ENCODE measurements at regions of chr17 and their contacts with region 1.

Region 1: DNA sequence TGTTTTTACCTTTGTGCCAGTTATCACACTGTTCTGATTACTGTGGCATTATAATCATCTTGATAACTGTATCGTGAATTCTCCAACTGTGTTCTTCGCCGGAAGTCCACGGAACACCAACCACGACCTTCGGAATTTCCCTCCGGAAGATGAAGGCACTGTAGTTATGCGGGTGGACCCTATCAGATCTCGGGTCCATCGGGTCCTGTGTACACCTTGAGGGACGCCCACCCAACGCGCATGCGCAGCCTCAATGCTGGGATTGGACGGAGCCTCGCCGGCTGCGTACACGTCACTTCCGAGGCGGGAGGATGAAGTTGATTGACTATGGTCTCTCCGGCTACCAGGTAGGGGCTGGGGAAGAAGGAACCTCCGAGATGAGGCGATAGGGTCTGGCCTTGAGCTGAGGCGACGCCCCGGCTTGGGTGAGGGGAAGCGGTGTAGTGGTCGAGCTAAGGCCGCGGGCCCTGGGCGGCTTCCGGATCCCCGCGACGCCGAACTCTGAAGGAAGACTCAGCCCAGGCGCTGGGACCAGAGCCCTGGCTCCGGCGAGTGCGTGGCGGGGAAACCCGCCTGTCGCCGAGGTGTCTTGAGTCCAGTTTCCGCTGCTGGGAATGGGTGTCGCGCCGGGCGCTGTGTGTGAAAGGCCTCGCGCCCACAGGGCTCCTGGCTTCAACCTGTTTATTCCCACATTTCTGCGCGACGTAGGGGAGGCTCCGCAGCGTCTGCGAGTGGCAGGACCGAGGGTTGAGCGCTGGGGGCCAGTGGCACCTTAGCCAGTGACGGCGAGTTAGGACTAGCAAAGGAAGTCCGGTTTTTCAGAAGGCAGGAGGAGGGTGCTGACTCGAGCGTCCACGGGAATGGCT is at the start of gene DHRS7B:
- DNase-seq: peak; percentile 93
- H3K4me3 ChIP-seq: peak within 1 kb of the TSS; percentile 47 to 84 (median 67)
- H3K27ac ChIP-seq: peak within 1 kb of the TSS; percentile 73
- H3K4me1 ChIP-seq: peaks cover 20% of the 10 kb centered on the region
- H3K27me3 ChIP-seq: peaks cover 0 to 2% of the 10 kb centered on the region in 2 experiments
- CTCF ChIP-seq: no peak
- POLR2A ChIP-seq: no peak
- total RNA-seq, gene DHRS7B: 12.7 and 14.0 TPM in 2 replicates

Region 2: DNA sequence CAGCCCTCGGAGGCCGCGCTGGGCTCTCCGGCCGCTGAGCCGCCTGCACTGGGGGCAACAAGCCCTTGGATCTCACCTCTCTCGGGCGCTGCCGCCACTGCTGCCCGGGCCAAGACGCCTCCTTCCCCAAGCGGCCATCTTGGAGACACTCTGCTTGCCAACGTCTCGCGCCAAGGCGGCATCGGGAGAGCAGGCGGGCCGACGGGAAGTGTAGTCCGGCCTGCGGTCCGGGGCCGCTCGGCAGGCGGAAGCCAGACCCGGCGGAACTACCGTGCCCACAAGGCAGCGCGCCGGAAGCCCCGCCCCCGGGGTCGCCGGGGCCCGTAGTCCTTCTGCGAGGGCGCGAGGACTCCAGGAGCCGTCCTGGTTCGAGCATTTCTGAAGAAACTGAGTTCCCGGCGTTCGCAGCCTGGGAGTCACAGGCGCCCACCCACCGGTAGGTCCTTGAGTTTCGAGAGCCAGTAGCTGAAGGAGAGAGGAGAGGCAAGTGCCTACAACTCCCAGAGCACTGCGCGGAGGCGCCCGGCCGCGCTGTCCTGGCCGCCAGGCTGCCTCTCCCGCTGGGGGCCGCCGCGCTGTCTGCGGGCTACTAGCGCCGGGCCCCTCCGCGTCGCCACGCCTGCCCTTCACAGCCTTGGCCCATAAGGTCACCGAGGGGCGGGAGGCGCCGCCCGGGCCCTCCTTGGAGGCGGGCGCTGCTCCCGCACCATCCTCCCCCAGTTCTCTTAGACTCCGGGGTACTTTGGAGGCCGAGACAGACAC is 87.3 kb after region 1 on chr17 and contains the start of gene TMEM11:
- CTCF ChIA-PET with region 1: interaction called, 35 read pairs
- POLR2A ChIA-PET with region 1: interaction called, 4 read pairs
- dilution Hi-C with region 1: no loop called
- intact Hi-C with region 1: loop called (anchors 1 kb)
- DNase-seq: peak; percentile 97
- H3K4me3 ChIP-seq: peak within 1 kb of the TSS; percentile 73 to 96 (median 96)
- H3K27ac ChIP-seq: peak within 1 kb of the TSS; percentile 77
- H3K4me1 ChIP-seq: peaks cover 20% of the 10 kb centered on the region
- H3K27me3 ChIP-seq: no peaks in the 10 kb centered on the region
- CTCF ChIP-seq: peak in 1 of 2 donors; percentile 5
- POLR2A ChIP-seq: peak; percentile 58
- total RNA-seq, gene TMEM11: 27.4 and 28.8 TPM in 2 replicates

Region 3: GRCh38 chr17:21252796-21253645 is 126.1 kb after region 1 on chr17 and contains the start of gene NATD1:
- CTCF ChIA-PET with region 1: interaction called, 11 read pairs
- POLR2A ChIA-PET with region 1: no interaction called
- dilution Hi-C with region 1: no loop called
- intact Hi-C with region 1: no loop called
- DNase-seq: peak; percentile 80
- H3K4me3 ChIP-seq: peak within 1 kb of the TSS; percentile 14 to 61 (median 40)
- H3K27ac ChIP-seq: no peak within 1 kb of the TSS
- H3K4me1 ChIP-seq: peaks cover 8% of the 10 kb centered on the region
- H3K27me3 ChIP-seq: no peaks in the 10 kb centered on the region
- CTCF ChIP-seq: no peak
- POLR2A ChIP-seq: no peak
- total RNA-seq, gene NATD1: 7.2 and 8.1 TPM in 2 replicates

Region 4: DNA sequence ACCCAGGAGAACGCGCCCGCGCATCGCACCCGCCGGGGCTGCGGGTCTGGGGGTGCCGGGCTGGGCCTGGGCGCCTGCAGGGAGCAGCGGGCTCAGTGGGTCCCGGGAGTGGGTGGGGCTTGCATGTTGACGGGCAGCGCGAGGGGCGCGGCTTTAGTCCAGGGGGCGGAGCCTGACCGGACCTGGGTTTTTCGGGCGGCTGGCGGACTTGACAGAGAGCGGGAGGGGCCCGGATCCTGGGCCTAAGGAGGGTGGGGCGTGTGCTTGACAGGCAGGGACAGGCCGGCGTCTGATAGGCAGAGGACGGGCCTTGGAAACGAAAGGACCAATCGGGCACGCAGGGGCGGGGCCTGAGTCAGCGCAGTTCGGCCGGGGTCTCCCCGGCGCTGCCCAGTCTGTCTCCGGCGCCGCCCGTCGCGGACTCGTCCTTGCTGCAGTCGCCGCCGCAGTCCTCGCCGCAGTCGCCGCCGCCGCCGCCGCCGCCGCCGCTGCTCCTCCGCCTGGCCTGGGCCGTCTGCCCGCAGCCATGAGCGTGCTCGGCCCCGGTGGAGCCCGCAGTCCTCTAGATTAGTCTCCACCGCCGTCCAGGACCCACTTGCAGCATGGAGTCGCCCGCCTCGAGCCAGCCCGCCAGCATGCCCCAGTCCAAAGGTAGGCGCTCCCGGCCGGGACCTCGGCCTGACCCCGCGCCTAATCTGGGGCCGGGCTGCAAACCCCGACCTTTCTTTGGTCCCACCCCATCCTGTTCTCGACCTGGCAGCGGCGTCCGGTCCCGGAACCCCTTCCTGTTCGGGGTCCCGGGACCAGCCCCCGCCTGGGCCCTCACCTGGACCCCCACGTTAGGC is 157.7 kb after region 1 on chr17 and contains the start of gene MAP2K3:
- CTCF ChIA-PET with region 1: interaction called, 71 read pairs
- POLR2A ChIA-PET with region 1: interaction called, 4 read pairs
- dilution Hi-C with region 1: no loop called
- intact Hi-C with region 1: loop called (anchors 2 kb)
- DNase-seq: peak; percentile 99
- H3K4me3 ChIP-seq: peak within 1 kb of the TSS; percentile 69 to 75 (median 74)
- H3K27ac ChIP-seq: peak within 1 kb of the TSS; percentile 99
- H3K4me1 ChIP-seq: peaks cover 48% of the 10 kb centered on the region
- H3K27me3 ChIP-seq: no peaks in the 10 kb centered on the region
- CTCF ChIP-seq: no peak
- POLR2A ChIP-seq: peak; percentile 82
- total RNA-seq, gene MAP2K3: 33.2 and 36.3 TPM in 2 replicates

Region 5: DNA sequence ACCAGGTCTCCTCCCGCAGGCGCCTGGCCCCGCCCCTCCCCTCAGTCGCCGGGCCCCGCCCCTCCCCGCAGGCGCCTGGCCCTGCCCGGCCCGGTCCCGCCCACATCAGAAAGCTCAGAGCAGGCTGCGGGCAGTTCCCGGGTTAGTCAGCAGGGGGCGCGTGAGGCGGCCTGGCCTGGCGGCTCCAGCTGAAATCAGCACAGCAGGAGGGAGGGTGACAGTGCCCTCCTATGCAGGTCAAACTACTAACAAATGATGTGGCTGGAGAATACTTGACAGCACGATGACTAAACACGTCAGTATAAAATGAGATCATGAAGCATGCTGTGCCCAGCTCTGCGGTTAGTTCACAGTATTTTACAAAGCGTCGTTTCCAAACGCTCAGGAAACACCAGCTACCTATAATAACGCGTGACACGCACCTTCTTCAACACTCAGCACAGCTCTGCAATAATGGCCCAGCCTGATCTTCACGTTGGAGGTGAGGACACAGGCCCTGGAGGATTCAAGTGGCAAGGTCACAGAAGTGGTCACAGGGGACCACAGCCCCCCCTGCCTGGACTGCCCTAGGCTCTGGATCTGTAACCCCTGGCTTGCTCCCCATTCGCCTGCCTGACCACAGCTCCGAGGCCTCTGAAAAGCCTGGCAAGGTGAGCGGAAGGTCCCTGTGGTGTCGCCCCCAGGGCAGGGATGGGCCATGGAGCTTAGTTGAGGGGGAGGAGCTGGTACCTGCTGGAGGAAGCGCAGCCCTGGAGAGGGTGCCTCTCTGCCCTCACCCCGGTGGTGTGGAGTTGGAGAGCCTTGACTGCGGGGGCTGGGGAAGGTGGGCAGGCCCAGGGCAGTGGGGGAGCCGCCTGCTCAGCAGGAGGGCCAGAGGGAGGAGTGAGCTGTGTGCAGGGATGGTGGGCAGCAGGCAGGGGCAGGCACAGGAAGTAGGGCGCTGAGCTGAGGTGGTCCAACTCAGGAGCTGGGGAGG is 330.5 kb after region 1 on chr17:
- CTCF ChIA-PET with region 1: interaction called, 9 read pairs
- POLR2A ChIA-PET with region 1: no interaction called
- dilution Hi-C with region 1: no loop called
- intact Hi-C with region 1: loop called (anchors 5 kb)
- DNase-seq: peak; percentile 86
- H3K4me3 ChIP-seq: no peak overlapping the region
- H3K27ac ChIP-seq: no peak overlapping the region
- H3K4me1 ChIP-seq: peaks cover 4% of the 10 kb centered on the region
- H3K27me3 ChIP-seq: no peaks in the 10 kb centered on the region
- CTCF ChIP-seq: peak; percentile 73 to 93
- POLR2A ChIP-seq: no peak